Activated CD4-positive, alpha-beta T cell treated with anti-CD3 and anti-CD28 coated beads, Interleukin-2, amount 10 ng/mL, durations not matched to agents 24 days and 14 days (primary cell): ENCODE measurements at regions of chr10 and their contacts with region 1.

Region 1: GRCh38 chr10:89163265-89163995 is 43.7 kb downstream of the CH25H start:
- DNase-seq: peak; percentile 89
- H3K4me3 Mint-ChIP-seq: peak overlapping the region; percentile 70
- H3K27ac Mint-ChIP-seq: peak overlapping the region; percentile 25
- H3K4me1 Mint-ChIP-seq: peaks cover 34% of the 10 kb centered on the region
- H3K27me3 Mint-ChIP-seq: peaks cover 40% of the 10 kb centered on the region

Region 2: GRCh38 chr10:88754287-88754686 is 409.1 kb before region 1 on chr10:
- intact Hi-C with region 1: no loop called
- DNase-seq: no peak
- H3K4me3 Mint-ChIP-seq: no peak overlapping the region
- H3K27ac Mint-ChIP-seq: no peak overlapping the region
- H3K4me1 Mint-ChIP-seq: peaks cover 5% of the 10 kb centered on the region
- H3K27me3 Mint-ChIP-seq: peaks cover 23% of the 10 kb centered on the region

Region 3: DNA sequence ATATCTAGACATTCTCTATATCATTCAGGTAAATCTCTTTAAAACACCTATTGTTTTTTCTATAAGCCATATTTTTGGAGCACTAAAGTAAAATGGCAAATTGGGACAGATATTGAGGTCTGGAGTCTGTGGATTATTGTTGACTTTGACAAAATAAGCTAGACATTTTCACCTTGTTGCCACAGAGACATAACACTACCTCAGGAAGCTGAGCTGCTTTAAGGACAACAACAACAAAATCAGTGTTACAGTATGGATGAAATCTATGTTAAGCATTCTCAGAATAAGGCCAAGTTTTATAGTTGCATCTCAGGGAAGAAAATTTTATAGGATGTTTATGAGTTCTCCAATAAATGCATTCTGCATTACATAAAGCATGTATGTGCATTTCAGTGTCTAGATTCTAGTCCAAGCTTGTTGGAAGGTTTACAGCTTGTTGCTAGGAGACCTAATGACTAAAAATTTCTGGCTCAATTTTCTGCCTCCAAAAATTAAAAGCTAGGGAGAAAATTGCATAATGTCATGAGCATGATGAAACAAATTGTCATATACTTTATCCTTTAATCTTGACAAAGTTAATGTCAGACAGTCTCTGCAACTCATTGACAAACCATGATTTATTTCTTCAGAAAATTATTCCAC is 342.6 kb before region 1 on chr10:
- intact Hi-C with region 1: loop called (anchors 10 kb)
- DNase-seq: no peak
- H3K4me3 Mint-ChIP-seq: no peak overlapping the region
- H3K27ac Mint-ChIP-seq: no peak overlapping the region
- H3K4me1 Mint-ChIP-seq: peaks cover 19% of the 10 kb centered on the region
- H3K27me3 Mint-ChIP-seq: peaks cover 10% of the 10 kb centered on the region

Region 4: DNA sequence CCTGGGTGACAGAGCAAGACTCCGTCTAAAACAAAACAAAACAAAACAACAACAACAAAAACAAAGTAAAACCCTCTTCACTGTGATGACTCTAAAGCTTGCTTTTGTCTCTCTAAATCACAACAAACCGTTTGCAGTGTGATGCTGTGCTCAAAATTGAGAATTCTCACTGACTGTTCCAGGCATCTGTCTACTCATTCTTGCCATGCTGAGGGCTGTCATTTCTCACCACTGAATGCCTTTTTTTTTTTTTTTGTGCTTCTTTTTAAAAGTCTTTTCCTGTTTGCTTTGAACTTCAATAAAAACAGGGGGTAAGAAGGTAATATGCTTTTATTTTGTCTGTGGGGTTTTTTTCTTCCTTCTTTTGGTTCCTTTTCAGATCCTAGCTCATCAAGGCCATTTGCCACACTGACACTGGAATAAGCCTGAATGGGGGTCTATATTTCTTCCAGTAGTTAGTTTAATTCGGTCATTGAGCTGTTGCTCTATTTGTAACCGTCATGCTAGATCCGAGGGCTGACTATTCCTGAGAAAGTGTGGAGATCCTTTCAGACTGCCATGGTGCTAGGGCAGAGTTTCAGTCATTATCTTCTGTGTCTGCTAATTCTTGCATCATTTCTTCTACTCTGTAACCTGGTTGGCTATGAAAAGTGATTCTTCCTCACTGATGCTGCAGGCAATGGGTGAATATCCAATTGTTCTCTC is 162.3 kb before region 1 on chr10:
- intact Hi-C with region 1: loop called (anchors 2 kb)
- DNase-seq: peak; percentile 79
- H3K4me3 Mint-ChIP-seq: peak overlapping the region; percentile 82
- H3K27ac Mint-ChIP-seq: peak overlapping the region; percentile 91
- H3K4me1 Mint-ChIP-seq: peaks cover 60% of the 10 kb centered on the region
- H3K27me3 Mint-ChIP-seq: no peaks in the 10 kb centered on the region

Region 5: DNA sequence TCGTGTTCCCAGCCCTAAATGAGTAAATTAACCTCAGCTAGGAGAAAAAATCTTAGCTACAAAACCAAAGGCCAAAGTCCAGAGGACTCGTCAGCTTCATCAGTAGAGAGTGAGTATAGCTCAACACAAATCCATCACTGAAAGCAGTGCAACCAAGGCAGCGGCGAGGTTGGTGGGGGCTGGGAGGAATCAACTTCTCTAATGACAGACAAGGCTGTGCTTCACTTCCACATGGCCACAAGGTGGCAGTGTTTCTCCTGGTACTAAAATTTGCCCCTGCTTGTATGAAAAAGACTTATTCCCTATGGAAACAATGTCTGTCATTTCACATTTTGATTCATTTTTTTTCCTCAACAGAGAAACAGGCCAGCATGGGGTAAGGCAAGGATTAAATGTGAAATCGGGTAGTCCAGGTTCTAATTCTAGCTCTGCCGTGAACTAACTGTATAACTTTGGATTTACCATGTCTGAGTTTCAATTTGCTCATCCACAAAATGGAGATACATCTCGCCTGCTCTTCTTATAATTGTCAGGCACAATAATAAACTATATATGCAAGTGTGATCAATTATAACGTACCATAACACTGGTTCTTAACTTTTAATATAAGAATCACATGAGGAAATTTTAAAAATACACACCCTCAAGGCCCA is 133.5 kb before region 1 on chr10:
- intact Hi-C with region 1: loop called (anchors 1 kb)
- DNase-seq: peak; percentile 90
- H3K4me3 Mint-ChIP-seq: no peak overlapping the region
- H3K27ac Mint-ChIP-seq: no peak overlapping the region
- H3K4me1 Mint-ChIP-seq: peaks cover 33% of the 10 kb centered on the region
- H3K27me3 Mint-ChIP-seq: no peaks in the 10 kb centered on the region

Region 6: GRCh38 chr10:89079961-89080360 is 83.5 kb before region 1 on chr10:
- intact Hi-C with region 1: loop called (anchors 1 kb)
- DNase-seq: no peak
- H3K4me3 Mint-ChIP-seq: no peak overlapping the region
- H3K27ac Mint-ChIP-seq: no peak overlapping the region
- H3K4me1 Mint-ChIP-seq: peaks cover 20% of the 10 kb centered on the region
- H3K27me3 Mint-ChIP-seq: peaks cover 12% of the 10 kb centered on the region

Region 7: DNA sequence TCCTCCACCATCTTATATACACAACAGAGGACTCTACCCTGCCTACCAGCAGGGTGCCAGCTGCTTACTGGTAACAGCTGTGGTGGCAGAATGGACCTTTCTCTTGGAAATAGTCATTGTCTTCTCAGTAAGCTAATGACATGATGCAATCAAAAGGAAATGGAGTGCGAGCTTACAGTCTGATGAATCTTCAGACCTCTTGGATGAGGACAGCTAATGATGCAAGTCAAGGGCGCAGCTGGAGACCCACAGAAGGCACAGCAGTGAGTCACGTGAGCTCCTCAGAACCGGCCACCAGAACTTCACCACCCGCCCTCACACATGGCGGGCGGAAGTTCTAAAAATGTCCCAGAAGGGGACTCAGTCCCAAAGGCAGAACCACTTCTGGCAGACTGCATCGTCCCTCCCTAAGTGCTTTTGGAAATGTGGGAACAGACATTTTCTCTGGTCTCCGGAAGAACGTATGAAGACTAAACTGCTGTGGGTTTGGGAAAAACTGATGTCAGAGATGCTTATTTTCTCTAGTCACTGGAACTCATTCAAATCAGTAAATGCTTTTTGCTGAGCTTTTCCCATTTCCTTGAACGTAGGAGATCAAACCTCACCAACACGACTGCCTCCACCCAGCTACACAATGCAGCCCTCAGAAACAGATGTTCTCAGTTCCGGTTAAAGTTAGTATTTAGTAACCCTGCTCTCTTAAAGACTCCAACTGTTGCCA is 76.5 kb before region 1 on chr10:
- intact Hi-C with region 1: loop called (anchors 1 kb)
- DNase-seq: peak; percentile 53
- H3K4me3 Mint-ChIP-seq: no peak overlapping the region
- H3K27ac Mint-ChIP-seq: no peak overlapping the region
- H3K4me1 Mint-ChIP-seq: peaks cover 9% of the 10 kb centered on the region
- H3K27me3 Mint-ChIP-seq: peaks cover 8% of the 10 kb centered on the region

Region 8: GRCh38 chr10:89207181-89207800 is 43.9 kb after region 1 on chr10 and contains the start of gene CH25H:
- intact Hi-C with region 1: loop called (anchors 2 kb)
- DNase-seq: peak; percentile 80
- H3K4me3 Mint-ChIP-seq: peak within 1 kb of the TSS; percentile 87
- H3K27ac Mint-ChIP-seq: peak within 1 kb of the TSS; percentile 71
- H3K4me1 Mint-ChIP-seq: peaks cover 17% of the 10 kb centered on the region
- H3K27me3 Mint-ChIP-seq: peaks cover 35% of the 10 kb centered on the region
- total RNA-seq, gene CH25H: not detected in 2 replicates

Region 9: DNA sequence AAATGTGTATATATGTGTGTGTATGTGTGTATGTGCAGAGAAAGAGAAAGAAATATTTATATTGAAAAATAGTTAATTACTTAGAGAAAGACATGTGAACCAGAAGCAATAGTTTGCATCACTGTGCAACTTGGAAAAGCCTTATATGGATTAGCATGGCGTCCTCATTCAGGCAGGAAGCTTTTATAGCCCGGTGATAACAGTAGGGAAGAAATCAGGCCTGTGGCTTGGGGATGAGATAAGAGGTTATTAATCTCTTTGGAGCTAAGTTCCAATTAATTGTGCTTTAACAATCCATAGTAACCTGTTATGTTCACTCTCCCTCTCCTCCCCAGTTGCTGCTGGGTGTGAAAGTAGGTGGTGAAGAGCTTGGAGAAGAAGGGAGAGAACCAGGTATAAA is 287.5 kb after region 1 on chr10:
- intact Hi-C with region 1: no loop called
- DNase-seq: no peak
- H3K4me3 Mint-ChIP-seq: no peak overlapping the region
- H3K27ac Mint-ChIP-seq: no peak overlapping the region
- H3K4me1 Mint-ChIP-seq: no peaks in the 10 kb centered on the region
- H3K27me3 Mint-ChIP-seq: peaks cover 25% of the 10 kb centered on the region